ENCODE measurements at regions of chr7 and their contacts with region 1.

Region 1: DNA sequence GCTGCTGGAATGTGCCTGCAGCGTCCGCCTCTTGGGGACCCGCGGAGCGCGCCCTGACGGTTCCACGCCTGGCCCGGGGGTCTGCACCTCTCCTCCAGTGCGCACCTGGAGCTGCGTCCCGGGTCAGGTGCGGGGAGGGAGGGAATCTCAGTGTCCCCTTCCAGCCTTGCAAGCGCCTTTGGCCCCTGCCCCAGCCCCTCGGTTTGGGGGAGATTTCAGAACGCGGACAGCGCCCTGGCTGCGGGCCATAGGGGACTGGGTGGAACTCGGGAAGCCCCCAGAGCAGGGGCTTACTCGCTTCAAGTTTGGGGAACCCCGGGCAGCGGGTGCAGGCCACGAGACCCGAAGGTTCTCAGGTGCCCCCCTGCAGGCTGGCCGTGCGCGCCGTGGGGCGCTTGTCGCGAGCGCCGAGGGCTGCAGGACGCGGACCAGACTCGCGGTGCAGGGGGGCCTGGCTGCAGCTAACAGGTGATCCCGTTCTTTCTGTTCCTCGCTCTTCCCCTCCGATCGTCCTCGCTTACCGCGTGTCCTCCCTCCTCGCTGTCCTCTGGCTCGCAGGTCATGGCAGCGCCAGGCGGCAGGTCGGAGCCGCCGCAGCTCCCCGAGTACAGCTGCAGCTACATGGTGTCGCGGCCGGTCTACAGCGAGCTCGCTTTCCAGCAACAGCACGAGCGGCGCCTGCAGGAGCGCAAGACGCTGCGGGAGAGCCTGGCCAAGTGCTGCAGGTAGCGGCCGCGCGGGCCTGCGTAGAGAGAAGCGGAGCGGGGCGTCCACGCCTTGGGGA is 645 bp downstream of the SLC26A4 start:
- DNase-seq: peak; percentile 55
- H3K4me3 Mint-ChIP-seq: peak overlapping the region; percentile 96
- H3K27ac Mint-ChIP-seq: peak overlapping the region; percentile 92
- H3K4me1 Mint-ChIP-seq: peaks cover 40% of the 10 kb centered on the region
- H3K27me3 Mint-ChIP-seq: peaks cover 3% of the 10 kb centered on the region

Region 2: DNA sequence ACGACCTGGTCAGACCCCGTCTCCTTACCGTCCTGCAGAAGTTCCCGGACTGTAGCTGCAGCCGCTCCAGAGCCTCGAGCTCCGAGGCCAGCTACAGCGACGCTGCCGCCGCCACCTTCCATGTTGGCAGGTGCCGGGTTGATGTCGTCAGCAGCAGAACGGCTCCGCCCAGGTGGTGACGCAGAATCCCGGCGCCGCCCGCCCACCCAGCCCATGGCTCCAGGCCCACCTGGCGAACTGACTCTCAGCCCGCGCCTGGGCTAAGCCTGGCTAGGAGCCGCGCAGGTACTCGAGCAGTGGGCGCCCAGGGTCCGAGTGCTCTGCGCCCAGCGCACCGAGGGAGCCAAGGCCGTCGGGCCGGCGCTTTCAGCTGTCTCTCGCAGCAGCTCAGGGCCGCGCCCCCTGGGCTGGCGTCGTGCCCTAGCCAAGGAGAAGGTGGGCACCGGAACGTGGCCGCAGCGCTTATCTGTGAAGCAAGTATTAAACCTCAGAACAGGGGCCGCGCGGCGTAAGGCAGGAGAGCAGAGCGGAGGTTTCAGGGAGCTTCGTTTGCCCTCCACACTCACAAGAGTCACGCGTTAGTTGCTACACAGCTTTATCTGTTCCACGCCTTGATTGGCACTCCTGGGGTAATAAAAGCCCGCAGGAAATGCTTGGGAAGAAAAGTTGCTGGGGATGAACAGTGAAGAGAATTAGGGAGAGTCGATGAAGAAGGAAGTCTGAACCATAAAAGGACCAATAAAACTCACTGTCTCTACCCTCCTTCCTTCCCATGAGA is 97.3 kb before region 1 on chr7 and contains the starts of genes COG5 and DUS4L:
- intact Hi-C with region 1: loop called (anchors 1 kb)
- DNase-seq: peak; percentile 75
- H3K4me3 Mint-ChIP-seq: peak within 1 kb of the TSS; percentile 89
- H3K27ac Mint-ChIP-seq: peak within 1 kb of the TSS; percentile 93
- H3K4me1 Mint-ChIP-seq: peaks cover 62% of the 10 kb centered on the region
- H3K27me3 Mint-ChIP-seq: no peaks in the 10 kb centered on the region
- total RNA-seq, gene COG5: 36.5 and 39.1 TPM in 2 replicates
- total RNA-seq, gene DUS4L: 11.8 and 13.5 TPM in 2 replicates

Region 3: GRCh38 chr7:107605218-107605815 is 56.0 kb before region 1 on chr7:
- intact Hi-C with region 1: loop called (anchors 2 kb)
- DNase-seq: no peak
- H3K4me3 Mint-ChIP-seq: no peak overlapping the region
- H3K27ac Mint-ChIP-seq: no peak overlapping the region
- H3K4me1 Mint-ChIP-seq: no peaks in the 10 kb centered on the region
- H3K27me3 Mint-ChIP-seq: no peaks in the 10 kb centered on the region

Region 4: DNA sequence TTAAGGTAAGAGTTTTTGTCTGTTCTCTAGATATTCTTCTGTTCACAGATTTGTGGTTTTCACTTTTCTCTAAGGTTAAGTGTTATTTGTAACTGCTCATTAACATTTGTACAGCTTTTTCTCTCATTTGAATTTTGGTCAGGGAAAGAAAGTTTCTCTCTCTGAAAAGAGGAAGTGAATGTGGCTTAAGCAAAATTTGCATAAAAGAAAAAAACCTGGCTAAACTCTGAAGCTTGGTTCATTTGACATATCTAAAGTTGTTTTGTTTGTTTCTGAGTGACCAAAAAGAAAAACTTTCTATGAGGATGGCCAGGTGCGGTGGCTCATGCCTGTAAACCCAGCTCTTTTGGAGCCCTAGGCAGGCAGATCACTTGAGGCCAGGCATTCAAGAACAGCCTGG is 22.7 kb before region 1 on chr7:
- intact Hi-C with region 1: loop called (anchors 1 kb)
- DNase-seq: no peak
- H3K4me3 Mint-ChIP-seq: peak overlapping the region; percentile 20
- H3K27ac Mint-ChIP-seq: no peak overlapping the region
- H3K4me1 Mint-ChIP-seq: peaks cover 50% of the 10 kb centered on the region
- H3K27me3 Mint-ChIP-seq: peaks cover 4% of the 10 kb centered on the region

Region 5: GRCh38 chr7:107816011-107816566 is 154.8 kb after region 1 on chr7:
- intact Hi-C with region 1: loop called (anchors 1 kb)
- DNase-seq: no peak
- H3K4me3 Mint-ChIP-seq: peak overlapping the region; percentile 19
- H3K27ac Mint-ChIP-seq: peak overlapping the region; percentile 72
- H3K4me1 Mint-ChIP-seq: peaks cover 25% of the 10 kb centered on the region
- H3K27me3 Mint-ChIP-seq: no peaks in the 10 kb centered on the region

Measured in activated T-helper 1 cell treated with anti-CD3 and anti-CD28 coated beads, Interleukin-12 subunit alpha, Interleukin-12 subunit beta, Interleukin-2, Interleukin-4 antibody, amounts not matched to agents 30 ng/mL and 10 ng/mL and 1 ng/mL, durations not matched to agents 14 hours and 24 hours and 36 hours (primary cell).